PC-9 (cell line): ENCODE measurements at regions of chr21 and their contacts with region 1.

Region 1: DNA sequence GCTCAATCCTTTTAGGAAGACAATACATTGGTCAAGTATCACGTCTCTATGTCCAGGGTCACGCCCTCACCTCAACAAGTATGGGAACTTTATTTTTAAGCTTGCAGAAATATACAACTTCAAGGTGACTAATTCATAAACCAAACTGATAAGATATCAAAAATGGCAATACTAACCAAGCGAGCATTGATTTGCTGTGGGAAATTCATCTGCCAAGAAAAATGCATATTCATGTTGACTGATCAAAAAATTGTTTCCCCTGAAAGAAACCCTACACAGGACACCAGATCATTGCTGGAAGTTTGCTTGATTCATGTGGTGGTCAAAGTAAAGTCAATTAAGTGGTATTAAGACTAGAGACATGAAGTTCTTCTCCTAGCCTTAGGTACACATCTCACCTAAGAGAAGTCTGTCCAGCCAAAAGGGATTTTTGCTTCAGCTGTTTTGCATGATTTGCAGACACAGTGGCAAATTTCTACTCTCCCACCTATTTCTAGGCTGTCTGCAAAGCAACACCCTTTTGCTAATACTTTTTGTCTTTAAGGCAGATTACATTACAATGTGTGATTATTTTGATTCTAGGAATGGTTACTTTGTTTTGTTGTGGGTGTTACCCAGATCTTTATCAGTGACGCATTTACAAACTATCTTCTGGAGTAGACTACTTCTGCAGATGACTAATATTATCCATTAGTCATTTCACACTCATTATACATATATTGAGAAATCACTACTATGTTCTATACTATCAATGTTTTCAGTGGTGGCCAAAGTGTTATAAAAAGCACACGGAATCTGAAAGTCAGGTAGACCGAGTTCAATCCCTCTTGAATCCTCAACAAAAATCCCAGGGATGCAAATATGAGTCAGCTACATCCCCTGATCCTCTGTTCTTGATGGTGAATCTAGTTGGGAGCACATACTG is 12.3 kb downstream of the SAMSN1 start:
- DNase-seq: peak; percentile 39 to 95
- H3K4me3 ChIP-seq: 0 out of 2 replicates have a peak overlapping the region, but pooled peaks have one; percentile 2
- H3K27ac ChIP-seq: peak overlapping the region; percentile 85
- H3K4me1 ChIP-seq: peaks cover 23% of the 10 kb centered on the region
- H3K27me3 ChIP-seq: no peaks in the 10 kb centered on the region
- CTCF ChIP-seq: no peak

Region 2: GRCh38 chr21:14454016-14455009 is 79.5 kb before region 1 on chr21:
- CTCF ChIA-PET with region 1: no interaction called
- POLR2A ChIA-PET with region 1: interaction called, 20 read pairs
- intact Hi-C with region 1: no loop called
- DNase-seq: no peak
- H3K4me3 ChIP-seq: no peak overlapping the region
- H3K27ac ChIP-seq: no peak overlapping the region
- H3K4me1 ChIP-seq: no peaks in the 10 kb centered on the region
- H3K27me3 ChIP-seq: no peaks in the 10 kb centered on the region
- CTCF ChIP-seq: no peak